ENCODE measurements at regions of chr20 and their contacts with region 1.

Region 1: DNA sequence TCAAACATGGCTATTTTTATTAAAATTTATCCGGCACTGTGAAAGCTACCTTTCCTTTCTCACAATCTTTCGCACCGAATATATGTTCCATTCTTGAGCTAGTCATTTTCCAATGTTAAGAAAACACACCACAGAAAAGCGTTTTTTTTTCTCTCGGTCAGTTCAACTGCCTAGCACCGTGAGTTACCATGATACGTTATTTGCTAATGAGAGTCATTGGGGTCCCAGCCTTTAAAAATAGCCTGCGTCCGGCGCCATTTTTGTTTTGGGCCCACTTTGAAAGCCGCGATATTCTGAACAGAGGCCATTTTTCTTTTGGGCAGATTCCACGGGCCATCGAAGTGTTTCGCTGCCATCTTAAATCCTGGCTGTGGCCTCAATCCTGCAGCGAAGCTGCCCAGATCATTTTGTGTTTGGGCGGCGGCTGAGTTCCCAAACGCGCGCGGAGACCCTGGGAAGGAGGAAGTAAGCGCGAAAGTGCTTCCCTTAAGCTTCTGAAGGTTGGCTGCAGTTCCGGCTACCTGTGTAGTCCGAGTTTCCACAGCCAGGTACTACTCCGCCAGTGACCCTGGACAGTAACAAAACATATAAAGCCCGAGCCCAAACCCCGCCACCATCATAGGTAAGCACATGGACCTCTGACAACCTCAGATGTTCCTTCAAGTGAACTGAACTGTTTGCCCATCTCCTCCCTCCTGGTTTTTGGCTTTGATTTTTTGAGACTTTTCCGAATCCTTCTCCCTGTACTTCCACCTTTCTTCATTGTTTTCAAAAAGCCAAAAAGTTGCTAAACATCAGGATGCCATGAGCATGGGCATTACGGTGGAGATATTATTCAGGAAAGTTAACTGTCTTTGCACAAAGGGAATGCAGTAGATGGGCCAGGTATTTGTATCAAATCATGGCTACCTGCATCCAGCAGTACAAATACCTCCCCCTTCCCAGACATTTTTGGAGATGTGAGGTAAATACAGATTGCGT is at the start of gene SLX4IP:
- DNase-seq: peak; percentile 68 to 94 (median 77)
- ATAC-seq: peak; percentile 64
- H3K4me3 ChIP-seq: peak within 1 kb of the TSS; percentile 69
- H3K4me3 Mint-ChIP-seq: peak within 1 kb of the TSS; percentile 94
- H3K27ac ChIP-seq: peak within 1 kb of the TSS; percentile 76 to 87
- H3K27ac Mint-ChIP-seq: peak within 1 kb of the TSS; percentile 97
- H3K4me1 ChIP-seq: peaks cover 23% of the 10 kb centered on the region
- H3K4me1 Mint-ChIP-seq: peaks cover 68% of the 10 kb centered on the region
- H3K27me3 ChIP-seq: no peaks in the 10 kb centered on the region
- H3K27me3 Mint-ChIP-seq: no peaks in the 10 kb centered on the region
- CTCF ChIP-seq: no peak
- total RNA-seq, gene SLX4IP: 1.6 to 1.8 TPM

Region 2: DNA sequence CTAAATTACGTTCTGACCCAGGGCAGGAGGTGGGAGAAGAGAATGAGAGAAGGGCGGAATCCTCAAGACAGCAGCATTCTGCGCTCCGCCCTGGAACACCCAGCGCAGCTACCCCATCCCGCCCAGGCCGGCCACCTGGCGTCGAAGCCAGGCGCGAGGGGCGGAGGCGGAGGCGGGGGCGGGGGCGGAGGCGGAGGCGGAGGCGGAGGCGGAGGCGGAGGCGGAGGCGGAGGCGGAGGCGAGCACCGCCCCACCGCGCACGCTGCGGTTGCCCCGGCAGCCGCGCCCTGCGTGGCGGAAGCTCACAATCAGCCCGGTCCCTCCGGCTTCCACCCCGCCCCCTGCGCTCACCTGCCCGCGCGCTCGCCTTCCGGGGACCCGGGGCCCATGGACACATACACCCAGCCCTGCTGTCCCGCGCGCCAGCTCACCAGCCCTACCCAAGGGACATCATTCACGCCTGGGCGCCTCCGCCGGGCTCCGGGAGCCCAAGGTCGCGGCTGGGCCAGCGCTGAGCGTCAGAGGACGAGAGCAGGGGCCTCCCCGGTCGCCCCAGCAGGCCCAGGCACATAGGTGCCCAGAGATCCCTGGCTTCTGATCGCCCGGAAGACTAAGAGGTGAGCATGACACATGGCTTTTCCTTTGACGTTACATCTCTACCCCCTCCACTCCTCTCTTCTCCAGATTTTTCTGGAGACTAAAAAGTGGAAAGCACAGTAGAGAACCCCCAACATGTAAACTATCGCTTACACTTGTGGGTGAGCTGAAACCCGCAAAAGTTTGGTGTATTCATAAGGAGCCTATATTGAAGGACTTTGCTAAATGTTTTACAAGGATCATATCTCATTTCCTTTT is 400.2 kb before region 1 on chr20 and contains the start of gene ANKEF1:
- CTCF ChIA-PET with region 1: interaction called, 4 read pairs
- POLR2A ChIA-PET with region 1: interaction called, 21 read pairs
- intact Hi-C with region 1: loop called (anchors 2 kb)
- DNase-seq: peak; percentile 61 to 92 (median 80)
- ATAC-seq: peak; percentile 98
- H3K4me3 ChIP-seq: peak within 1 kb of the TSS; percentile 62
- H3K4me3 Mint-ChIP-seq: peak within 1 kb of the TSS; percentile 84
- H3K27ac ChIP-seq: peak within 1 kb of the TSS in 1 of 2 donors; percentile 29
- H3K27ac Mint-ChIP-seq: peak within 1 kb of the TSS; percentile 80
- H3K4me1 ChIP-seq: peaks cover 13% of the 10 kb centered on the region
- H3K4me1 Mint-ChIP-seq: peaks cover 30% of the 10 kb centered on the region
- H3K27me3 ChIP-seq: no peaks in the 10 kb centered on the region
- H3K27me3 Mint-ChIP-seq: peaks cover 9% of the 10 kb centered on the region
- CTCF ChIP-seq: no peak
- total RNA-seq, gene ANKEF1: 1.3 TPM

Region 3: GRCh38 chr20:10447027-10447426 is 11.9 kb after region 1 on chr20:
- CTCF ChIA-PET with region 1: interaction called, 3 read pairs
- POLR2A ChIA-PET with region 1: interaction called, 22 read pairs
- intact Hi-C with region 1: loop called in 1 of 2 experiments (anchors 1 kb)
- DNase-seq: peak in 11 of 14 experiments; percentile 9 to 76 (median 26)
- ATAC-seq: peak; percentile 87
- H3K4me3 ChIP-seq: no peak overlapping the region
- H3K4me3 Mint-ChIP-seq: peak overlapping the region; percentile 65
- H3K27ac ChIP-seq: no peak overlapping the region
- H3K27ac Mint-ChIP-seq: peak overlapping the region; percentile 45
- H3K4me1 ChIP-seq: peaks cover 4% of the 10 kb centered on the region
- H3K4me1 Mint-ChIP-seq: peaks cover 32% of the 10 kb centered on the region
- H3K27me3 ChIP-seq: no peaks in the 10 kb centered on the region
- H3K27me3 Mint-ChIP-seq: no peaks in the 10 kb centered on the region
- CTCF ChIP-seq: no peak

Region 4: DNA sequence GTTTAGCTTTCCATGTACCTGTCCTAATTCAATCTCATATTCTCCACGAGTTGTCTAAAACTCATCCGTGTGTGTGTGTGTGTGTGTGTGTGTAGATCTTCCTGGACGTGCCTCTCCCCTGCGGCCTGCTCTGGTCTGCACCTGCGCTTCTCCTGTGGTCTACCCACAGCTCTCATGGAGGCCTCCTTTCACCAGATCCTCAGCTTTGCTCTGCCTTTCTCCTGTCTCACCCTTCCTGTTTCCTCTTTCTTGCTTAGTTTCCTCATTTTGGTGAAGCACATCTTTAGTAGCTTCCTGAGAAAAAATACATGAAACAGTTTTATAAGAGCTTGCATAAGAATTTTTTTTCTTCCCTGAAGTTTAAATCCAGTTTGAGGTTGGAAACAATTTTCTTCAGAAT is 18.1 kb after region 1 on chr20:
- CTCF ChIA-PET with region 1: interaction called, 3 read pairs
- POLR2A ChIA-PET with region 1: interaction called, 22 read pairs
- intact Hi-C with region 1: loop called in 1 of 2 experiments (anchors 1 kb)
- DNase-seq: peak in 5 of 14 experiments; percentile 6 to 58 (median 54)
- ATAC-seq: peak; percentile 64
- H3K4me3 ChIP-seq: no peak overlapping the region
- H3K4me3 Mint-ChIP-seq: peak overlapping the region; percentile 4
- H3K27ac ChIP-seq: peak overlapping the region in 1 of 2 donors; percentile 55
- H3K27ac Mint-ChIP-seq: peak overlapping the region; percentile 54
- H3K4me1 ChIP-seq: peaks cover 9% of the 10 kb centered on the region
- H3K4me1 Mint-ChIP-seq: peaks cover 24% of the 10 kb centered on the region
- H3K27me3 ChIP-seq: no peaks in the 10 kb centered on the region
- H3K27me3 Mint-ChIP-seq: no peaks in the 10 kb centered on the region
- CTCF ChIP-seq: no peak

Region 5: GRCh38 chr20:10501402-10501801 is 66.3 kb after region 1 on chr20:
- CTCF ChIA-PET with region 1: no interaction called
- POLR2A ChIA-PET with region 1: interaction called, 7 read pairs
- intact Hi-C with region 1: loop called (anchors 5 to 10 kb)
- DNase-seq: peak in 6 of 14 experiments; percentile 5 to 34 (median 26)
- ATAC-seq: peak; percentile 52
- H3K4me3 ChIP-seq: peak overlapping the region; percentile 54
- H3K4me3 Mint-ChIP-seq: peak overlapping the region; percentile 89
- H3K27ac ChIP-seq: peak overlapping the region in 1 of 2 donors; percentile 71
- H3K27ac Mint-ChIP-seq: peak overlapping the region; percentile 93
- H3K4me1 ChIP-seq: peaks cover 19% of the 10 kb centered on the region
- H3K4me1 Mint-ChIP-seq: peaks cover 35% of the 10 kb centered on the region
- H3K27me3 ChIP-seq: no peaks in the 10 kb centered on the region
- H3K27me3 Mint-ChIP-seq: no peaks in the 10 kb centered on the region
- CTCF ChIP-seq: no peak

Region 6: GRCh38 chr20:10511509-10512251 is 76.6 kb after region 1 on chr20:
- CTCF ChIA-PET with region 1: no interaction called
- POLR2A ChIA-PET with region 1: interaction called, 11 read pairs
- intact Hi-C with region 1: loop called in 1 of 2 experiments (anchors 10 kb)
- DNase-seq: peak in 13 of 14 experiments; percentile 11 to 84 (median 45)
- ATAC-seq: peak; percentile 86
- H3K4me3 ChIP-seq: no peak overlapping the region
- H3K4me3 Mint-ChIP-seq: peak overlapping the region; percentile 38
- H3K27ac ChIP-seq: no peak overlapping the region
- H3K27ac Mint-ChIP-seq: peak overlapping the region; percentile 38
- H3K4me1 ChIP-seq: peaks cover 10% of the 10 kb centered on the region
- H3K4me1 Mint-ChIP-seq: peaks cover 42% of the 10 kb centered on the region
- H3K27me3 ChIP-seq: no peaks in the 10 kb centered on the region
- H3K27me3 Mint-ChIP-seq: no peaks in the 10 kb centered on the region
- CTCF ChIP-seq: no peak

Region 7: DNA sequence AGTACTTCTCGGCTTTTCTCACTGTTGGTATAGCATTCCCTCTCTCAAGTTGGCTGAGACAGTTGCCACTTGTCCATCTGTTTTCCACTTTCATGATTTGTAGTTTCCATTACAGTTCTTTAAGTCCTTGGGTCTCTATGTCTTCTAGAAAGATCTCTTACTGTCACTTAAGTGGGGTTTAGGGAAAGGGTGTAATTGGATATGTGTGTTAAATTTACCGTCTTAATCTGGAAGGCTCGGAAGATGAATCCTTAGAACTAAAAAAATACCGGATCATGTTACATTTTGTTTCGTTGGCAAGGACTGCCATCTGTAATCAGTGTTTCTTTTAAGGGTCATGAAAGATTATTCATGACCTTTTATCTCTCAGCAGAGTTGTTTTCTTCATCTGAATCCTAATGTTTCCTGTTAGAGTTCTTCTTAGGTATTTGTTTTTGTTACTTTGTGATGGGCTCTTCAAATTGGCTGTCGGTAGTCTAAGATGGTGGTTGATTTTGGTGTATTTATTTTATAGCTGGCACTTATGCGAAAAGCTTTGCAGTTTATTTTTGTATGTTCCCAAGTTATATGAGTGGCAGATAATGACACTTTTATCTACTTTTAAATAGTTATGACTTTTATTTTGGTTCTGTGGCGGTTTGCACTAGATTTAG is 1460.8 kb after region 1 on chr20:
- CTCF ChIA-PET with region 1: no interaction called
- POLR2A ChIA-PET with region 1: no interaction called
- intact Hi-C with region 1: loop called in 1 of 2 experiments (anchors 5 kb)
- DNase-seq: no peak
- ATAC-seq: no peak
- H3K4me3 ChIP-seq: no peak overlapping the region
- H3K4me3 Mint-ChIP-seq: no peak overlapping the region
- H3K27ac ChIP-seq: no peak overlapping the region
- H3K27ac Mint-ChIP-seq: no peak overlapping the region
- H3K4me1 ChIP-seq: no peaks in the 10 kb centered on the region
- H3K4me1 Mint-ChIP-seq: peaks cover 26% of the 10 kb centered on the region
- H3K27me3 ChIP-seq: no peaks in the 10 kb centered on the region
- H3K27me3 Mint-ChIP-seq: peaks cover 5% of the 10 kb centered on the region
- CTCF ChIP-seq: no peak

Measured in CD4-positive, alpha-beta T cell (primary cell).